ENCODE measurements at regions of chr4 and their contacts with region 1.

Region 1: DNA sequence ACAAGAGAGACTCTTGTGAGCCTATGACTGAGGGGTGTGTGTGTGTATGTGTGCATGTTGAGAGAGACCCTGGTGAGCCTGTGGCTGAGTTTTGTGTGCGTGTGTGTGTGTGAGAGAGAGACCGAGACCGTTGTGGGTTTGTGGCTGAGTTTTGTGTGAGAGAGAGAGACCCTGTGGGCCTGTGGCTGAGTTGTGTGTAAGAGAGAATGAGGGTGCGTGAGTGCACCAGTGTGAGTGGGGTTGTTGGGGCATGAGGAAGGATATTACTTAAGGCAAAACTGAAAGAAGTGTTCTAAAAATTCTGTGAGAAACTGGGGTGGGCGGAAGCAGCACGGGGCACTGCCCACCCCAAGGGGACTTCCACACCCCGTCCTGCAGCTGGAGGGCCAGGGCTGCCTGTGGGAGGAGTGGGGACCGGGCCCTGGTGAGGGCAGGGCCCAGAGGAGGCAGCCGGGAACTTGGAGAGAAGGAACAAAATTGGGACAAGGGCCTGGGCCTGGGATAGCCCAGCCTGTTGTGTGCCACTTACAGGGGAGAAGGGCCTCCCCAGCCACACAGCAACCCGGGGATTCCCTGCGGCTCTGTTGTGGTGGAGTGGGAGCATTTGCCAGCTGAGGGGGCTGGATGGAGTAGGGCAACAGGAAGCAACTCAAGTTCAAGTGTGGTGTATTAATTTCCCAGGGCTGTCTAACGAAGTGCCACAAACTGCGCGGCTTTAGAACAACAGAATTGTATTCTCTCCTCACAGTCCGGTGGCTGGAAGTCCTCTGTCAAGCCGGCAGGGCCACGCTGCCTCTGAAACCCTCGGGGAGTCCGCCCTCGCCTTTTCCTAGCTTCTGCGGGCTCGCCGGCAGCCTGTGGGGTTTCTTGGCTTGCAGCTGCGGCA is 22.1 kb downstream of the TMEM131L start:
- DNase-seq: peak; percentile 44 to 94 (median 73)
- ATAC-seq: peak; percentile 66
- H3K4me3 ChIP-seq: peak overlapping the region; percentile 51 to 57
- H3K4me3 Mint-ChIP-seq: peak overlapping the region; percentile 78
- H3K27ac ChIP-seq: peak overlapping the region; percentile 54 to 94
- H3K27ac Mint-ChIP-seq: peak overlapping the region; percentile 95
- H3K4me1 ChIP-seq: peaks cover 87% of the 10 kb centered on the region
- H3K4me1 Mint-ChIP-seq: peaks cover 85% of the 10 kb centered on the region
- H3K27me3 ChIP-seq: no peaks in the 10 kb centered on the region
- H3K27me3 Mint-ChIP-seq: no peaks in the 10 kb centered on the region
- CTCF ChIP-seq: no peak

Region 2: DNA sequence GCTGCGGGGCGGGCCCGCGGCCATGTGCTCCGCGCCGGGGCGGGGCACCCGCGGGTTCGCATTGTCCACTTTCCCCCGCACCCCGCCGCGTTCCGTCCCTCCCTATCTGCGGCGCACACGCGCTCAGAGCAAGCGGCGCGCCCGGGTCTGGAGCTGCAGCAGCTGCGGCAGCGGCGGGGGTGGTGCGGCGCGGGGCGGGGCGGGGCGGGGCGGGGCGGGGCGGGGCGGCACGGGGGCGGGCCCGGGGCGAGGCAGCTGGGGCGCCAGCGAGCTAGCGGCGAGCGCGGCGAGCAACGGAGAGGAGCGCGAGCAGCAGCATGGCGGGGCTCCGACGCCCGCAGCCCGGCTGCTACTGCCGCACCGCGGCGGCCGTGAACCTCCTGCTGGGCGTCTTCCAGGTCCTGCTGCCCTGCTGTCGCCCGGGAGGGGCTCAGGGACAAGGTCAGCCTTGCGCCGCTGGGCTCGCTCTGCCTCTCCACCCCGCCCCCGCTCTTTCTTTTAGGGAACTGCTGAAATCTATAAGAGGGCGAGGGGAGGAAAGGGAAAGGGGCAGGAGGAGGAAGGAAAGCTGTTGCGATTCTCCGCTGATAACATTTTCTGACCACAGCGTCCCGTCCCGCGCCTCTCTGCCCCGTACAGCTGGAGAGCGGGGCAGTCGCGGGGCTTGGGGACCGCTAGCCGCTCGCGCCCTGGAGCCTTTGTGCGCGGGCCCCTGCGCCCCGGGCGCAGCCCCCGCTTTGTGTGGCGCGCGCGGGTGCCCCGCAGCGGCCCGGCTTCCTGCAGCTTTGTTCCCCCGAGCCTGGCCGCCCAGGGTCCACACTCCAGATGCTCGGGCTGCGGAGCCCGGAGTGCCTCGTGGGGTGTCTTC is 21.9 kb before region 1 on chr4 and contains the start of gene TMEM131L:
- CTCF ChIA-PET with region 1: interaction called, 26 read pairs
- POLR2A ChIA-PET with region 1: interaction called, 50 read pairs
- intact Hi-C with region 1: loop called in 1 of 2 experiments (anchors 1 kb)
- DNase-seq: peak; percentile 58 to 92 (median 69)
- ATAC-seq: peak; percentile 77
- H3K4me3 ChIP-seq: peak within 1 kb of the TSS; percentile 77 to 94
- H3K4me3 Mint-ChIP-seq: peak within 1 kb of the TSS; percentile 95
- H3K27ac ChIP-seq: peak within 1 kb of the TSS; percentile 76 to 92
- H3K27ac Mint-ChIP-seq: peak within 1 kb of the TSS; percentile 96
- H3K4me1 ChIP-seq: peaks cover 40% of the 10 kb centered on the region
- H3K4me1 Mint-ChIP-seq: peaks cover 44% of the 10 kb centered on the region
- H3K27me3 ChIP-seq: no peaks in the 10 kb centered on the region
- H3K27me3 Mint-ChIP-seq: no peaks in the 10 kb centered on the region
- CTCF ChIP-seq: peak; percentile 35
- total RNA-seq, gene TMEM131L: 80.8 to 83.1 TPM

Region 3: DNA sequence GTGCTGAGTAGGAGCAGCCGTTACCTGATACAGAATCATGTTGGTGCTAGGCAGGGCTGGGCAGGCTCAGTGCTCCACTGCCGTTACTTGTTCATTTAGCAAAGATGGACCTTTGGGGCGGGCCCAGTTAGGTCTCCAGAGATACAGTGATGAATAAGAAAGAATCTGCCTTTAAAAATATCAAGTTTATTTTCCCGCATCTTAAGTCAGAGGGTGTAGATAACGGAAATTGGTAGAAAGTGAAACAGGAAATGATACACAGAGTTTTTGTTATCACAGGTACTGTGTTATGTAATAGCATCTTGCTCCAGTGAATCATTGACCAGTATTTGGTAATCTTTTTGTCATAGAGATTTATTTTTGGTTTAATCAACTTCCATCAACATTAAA is 16.6 kb before region 1 on chr4:
- CTCF ChIA-PET with region 1: interaction called, 26 read pairs
- POLR2A ChIA-PET with region 1: interaction called, 50 read pairs
- intact Hi-C with region 1: loop called (anchors 1 kb)
- DNase-seq: peak in 5 of 9 experiments; percentile 41 to 80 (median 64)
- ATAC-seq: peak; percentile 60
- H3K4me3 ChIP-seq: peak overlapping the region; percentile 49 to 64
- H3K4me3 Mint-ChIP-seq: peak overlapping the region; percentile 95
- H3K27ac ChIP-seq: peak overlapping the region; percentile 76 to 92
- H3K27ac Mint-ChIP-seq: peak overlapping the region; percentile 96
- H3K4me1 ChIP-seq: peaks cover 51% of the 10 kb centered on the region
- H3K4me1 Mint-ChIP-seq: peaks cover 74% of the 10 kb centered on the region
- H3K27me3 ChIP-seq: no peaks in the 10 kb centered on the region
- H3K27me3 Mint-ChIP-seq: no peaks in the 10 kb centered on the region
- CTCF ChIP-seq: no peak

Region 4: DNA sequence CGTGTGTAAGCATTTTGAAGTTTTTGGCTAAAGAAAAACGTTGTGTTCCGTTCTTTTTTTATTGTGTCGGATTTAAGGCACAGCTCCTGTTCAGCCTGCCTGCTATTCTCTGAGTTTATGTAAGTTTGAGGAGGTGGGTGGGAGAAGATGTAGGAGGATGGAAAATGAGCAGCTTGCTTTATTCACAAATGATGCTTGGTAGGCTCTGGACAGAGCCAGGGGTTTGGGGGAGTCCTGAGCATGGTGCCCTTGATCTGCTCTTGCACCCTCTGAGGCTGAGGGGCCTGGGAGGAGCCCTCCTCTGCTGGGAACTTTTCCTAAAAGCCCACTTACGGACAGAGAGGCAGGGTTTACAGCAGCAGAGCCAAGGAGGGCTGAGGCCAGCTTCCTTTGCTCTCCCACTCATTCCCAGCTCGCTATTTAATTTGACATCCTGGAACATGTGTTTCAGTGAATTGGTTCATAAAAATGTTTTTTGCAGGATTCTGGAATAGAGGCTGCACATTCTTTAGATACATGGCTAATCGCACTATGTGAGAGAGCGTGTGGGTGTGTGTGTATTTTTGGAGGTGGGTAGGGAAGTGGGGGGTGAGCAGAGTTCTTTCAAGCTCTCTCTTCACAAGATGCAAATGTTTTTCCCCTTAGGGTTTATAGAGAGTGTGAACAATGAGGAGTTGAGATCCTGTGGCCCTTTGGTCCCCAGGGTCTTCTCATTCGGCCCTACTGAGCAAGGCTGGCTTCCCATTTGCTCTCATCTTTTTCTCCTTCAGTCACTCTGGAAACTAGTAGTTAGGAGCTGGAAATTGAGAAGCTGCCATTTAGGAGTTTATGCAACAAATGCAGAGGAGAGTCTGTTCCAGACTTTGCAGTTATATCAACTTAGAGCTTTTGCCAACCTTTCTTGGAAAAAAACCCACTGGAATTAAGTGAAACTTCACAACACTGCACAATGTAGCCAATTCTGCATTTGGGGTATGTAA is 10.0 kb after region 1 on chr4:
- CTCF ChIA-PET with region 1: interaction called, 11 read pairs
- POLR2A ChIA-PET with region 1: interaction called, 11 read pairs
- intact Hi-C with region 1: loop called in 1 of 2 experiments (anchors 1 kb)
- DNase-seq: peak in 2 of 9 experiments; percentile 27 to 62
- ATAC-seq: peak; percentile 15
- H3K4me3 ChIP-seq: peak overlapping the region in 1 of 2 experiments; percentile 37
- H3K4me3 Mint-ChIP-seq: peak overlapping the region; percentile 66
- H3K27ac ChIP-seq: peak overlapping the region; percentile 54 to 78
- H3K27ac Mint-ChIP-seq: peak overlapping the region; percentile 97
- H3K4me1 ChIP-seq: peaks cover 92% of the 10 kb centered on the region
- H3K4me1 Mint-ChIP-seq: peaks cover 90% of the 10 kb centered on the region
- H3K27me3 ChIP-seq: no peaks in the 10 kb centered on the region
- H3K27me3 Mint-ChIP-seq: no peaks in the 10 kb centered on the region
- CTCF ChIP-seq: no peak

Region 5: GRCh38 chr4:153521999-153522801 is 34.0 kb after region 1 on chr4:
- CTCF ChIA-PET with region 1: interaction called, 5 read pairs
- POLR2A ChIA-PET with region 1: interaction called, 6 read pairs
- intact Hi-C with region 1: loop called (anchors 2 to 5 kb)
- DNase-seq: peak in 8 of 9 experiments; percentile 37 to 90 (median 66)
- ATAC-seq: peak; percentile 54
- H3K4me3 ChIP-seq: peak overlapping the region; percentile 21 to 28
- H3K4me3 Mint-ChIP-seq: peak overlapping the region; percentile 77
- H3K27ac ChIP-seq: peak overlapping the region; percentile 22 to 75
- H3K27ac Mint-ChIP-seq: peak overlapping the region; percentile 94
- H3K4me1 ChIP-seq: peaks cover 87% of the 10 kb centered on the region
- H3K4me1 Mint-ChIP-seq: peaks cover 91% of the 10 kb centered on the region
- H3K27me3 ChIP-seq: no peaks in the 10 kb centered on the region
- H3K27me3 Mint-ChIP-seq: no peaks in the 10 kb centered on the region
- CTCF ChIP-seq: no peak

Region 6: GRCh38 chr4:153528705-153529485 is 40.6 kb after region 1 on chr4:
- CTCF ChIA-PET with region 1: interaction called, 4 read pairs
- POLR2A ChIA-PET with region 1: interaction called, 4 read pairs
- intact Hi-C with region 1: loop called (anchors 2 to 5 kb)
- DNase-seq: no peak
- ATAC-seq: peak; percentile 21
- H3K4me3 ChIP-seq: peak overlapping the region in 1 of 2 experiments; percentile 28
- H3K4me3 Mint-ChIP-seq: peak overlapping the region; percentile 77
- H3K27ac ChIP-seq: peak overlapping the region; percentile 17 to 76
- H3K27ac Mint-ChIP-seq: peak overlapping the region; percentile 94
- H3K4me1 ChIP-seq: peaks cover 96% of the 10 kb centered on the region
- H3K4me1 Mint-ChIP-seq: peaks cover 88% of the 10 kb centered on the region
- H3K27me3 ChIP-seq: no peaks in the 10 kb centered on the region
- H3K27me3 Mint-ChIP-seq: no peaks in the 10 kb centered on the region
- CTCF ChIP-seq: no peak

Measured in CD8-positive, alpha-beta T cell (primary cell).